ENCODE measurements at regions of chr2 and their contacts with region 1.

Region 1: DNA sequence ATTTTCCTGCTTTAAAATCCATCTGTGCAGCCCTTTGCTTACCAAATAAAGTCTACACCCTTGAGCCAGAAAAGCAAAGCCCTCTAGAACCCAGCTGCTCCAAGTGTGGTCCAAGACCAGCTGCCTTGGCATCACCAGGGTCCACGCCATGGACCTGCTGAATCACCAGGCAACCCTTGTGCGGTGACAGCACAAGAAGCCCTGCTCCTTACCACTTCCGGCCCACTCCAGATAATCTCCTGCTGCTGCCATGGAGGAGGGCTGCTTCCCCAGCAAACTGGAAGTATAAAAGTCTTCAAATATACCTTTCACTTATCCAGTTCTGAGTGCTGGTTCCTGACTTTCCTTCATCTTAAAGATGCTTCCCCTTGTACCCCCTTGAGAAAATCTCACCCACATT is 106.0 kb upstream of the PKDCC start:
- DNase-seq: no peak
- ATAC-seq: no peak
- H3K4me3 ChIP-seq: no peak overlapping the region
- H3K4me3 Mint-ChIP-seq: no peak overlapping the region
- H3K27ac ChIP-seq: no peak overlapping the region
- H3K27ac Mint-ChIP-seq: no peak overlapping the region
- H3K4me1 ChIP-seq: no peaks in the 10 kb centered on the region
- H3K4me1 Mint-ChIP-seq: no peaks in the 10 kb centered on the region
- H3K27me3 ChIP-seq: peaks cover 0 to 5% of the 10 kb centered on the region in 2 experiments
- H3K27me3 Mint-ChIP-seq: peaks cover 13% of the 10 kb centered on the region
- CTCF ChIP-seq: no peak

Region 2: DNA sequence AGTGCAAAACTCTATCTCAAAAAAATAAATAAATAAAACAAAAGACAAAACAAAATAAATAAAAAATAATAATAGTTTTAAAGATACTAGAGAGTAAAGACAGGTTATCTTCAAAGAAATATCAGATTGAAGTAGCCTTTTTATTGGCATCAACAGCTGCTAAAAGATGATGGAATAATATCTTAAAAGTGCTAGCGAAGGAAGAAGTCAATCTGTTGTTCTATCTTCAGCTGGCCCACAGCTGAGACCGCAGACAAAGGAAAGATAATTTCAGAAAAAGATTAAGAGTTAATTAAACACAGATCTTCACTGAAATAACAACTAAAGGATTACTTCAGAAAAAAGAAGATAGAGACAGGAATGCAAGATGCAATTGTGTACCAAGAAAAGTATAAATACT is 24.2 kb before region 1 on chr2:
- CTCF ChIA-PET with region 1: no interaction called
- POLR2A ChIA-PET with region 1: no interaction called
- intact Hi-C with region 1: loop called in 1 of 2 experiments (anchors 2 kb)
- DNase-seq: no peak
- ATAC-seq: no peak
- H3K4me3 ChIP-seq: no peak overlapping the region
- H3K4me3 Mint-ChIP-seq: no peak overlapping the region
- H3K27ac ChIP-seq: no peak overlapping the region
- H3K27ac Mint-ChIP-seq: no peak overlapping the region
- H3K4me1 ChIP-seq: no peaks in the 10 kb centered on the region
- H3K4me1 Mint-ChIP-seq: no peaks in the 10 kb centered on the region
- H3K27me3 ChIP-seq: no peaks in the 10 kb centered on the region
- H3K27me3 Mint-ChIP-seq: peaks cover 6% of the 10 kb centered on the region
- CTCF ChIP-seq: no peak

Region 3: GRCh38 chr2:42457011-42457410 is 515.2 kb after region 1 on chr2:
- CTCF ChIA-PET with region 1: no interaction called
- POLR2A ChIA-PET with region 1: no interaction called
- intact Hi-C with region 1: no loop called
- DNase-seq: no peak
- ATAC-seq: no peak
- H3K4me3 ChIP-seq: no peak overlapping the region
- H3K4me3 Mint-ChIP-seq: no peak overlapping the region
- H3K27ac ChIP-seq: no peak overlapping the region
- H3K27ac Mint-ChIP-seq: no peak overlapping the region
- H3K4me1 ChIP-seq: no peaks in the 10 kb centered on the region
- H3K4me1 Mint-ChIP-seq: no peaks in the 10 kb centered on the region
- H3K27me3 ChIP-seq: no peaks in the 10 kb centered on the region
- H3K27me3 Mint-ChIP-seq: peaks cover 4% of the 10 kb centered on the region
- CTCF ChIP-seq: no peak

Measured in CD4-positive, alpha-beta T cell (primary cell).